Gastrocnemius medialis (tissue), 4 donors: ENCODE measurements at regions of chr21 and their contacts with region 1.

Region 1: DNA sequence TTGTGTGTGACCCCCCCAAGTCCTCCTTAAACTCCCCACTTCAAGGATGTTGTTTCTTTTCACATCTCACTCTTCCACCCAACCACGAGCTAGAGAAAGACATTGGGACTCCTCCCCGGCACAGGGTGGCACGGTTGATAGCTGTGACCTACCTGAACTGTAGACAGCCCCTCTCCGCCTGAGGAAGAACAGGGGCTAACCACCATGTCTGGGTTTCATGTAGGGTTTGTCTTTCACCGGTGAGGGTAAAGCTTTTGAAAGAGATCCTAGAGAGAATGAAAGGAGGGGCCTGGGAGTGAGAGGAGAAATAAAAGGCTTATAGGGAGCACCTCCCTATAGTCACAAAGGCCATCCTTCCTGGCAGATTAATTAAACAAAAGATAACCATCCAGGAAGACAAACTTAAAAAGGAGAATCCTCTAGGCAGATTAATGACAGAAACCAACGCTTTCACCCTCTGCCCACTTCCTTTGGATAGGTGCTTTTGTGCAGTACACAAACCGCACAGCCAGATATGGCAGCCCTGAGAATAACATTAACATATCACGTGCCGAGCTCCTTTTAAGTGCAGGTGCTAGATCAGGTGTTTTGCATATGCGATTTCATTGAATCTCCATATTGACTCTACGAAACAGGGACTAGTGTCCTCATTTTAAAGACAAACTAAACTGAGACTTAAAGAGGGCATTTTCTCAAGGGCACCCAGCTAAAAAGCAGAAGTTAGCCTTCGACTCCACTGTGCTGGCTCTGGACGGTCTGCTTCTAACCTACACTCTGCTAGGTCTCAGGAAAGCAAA is 178.0 kb upstream of the RUNX1 start:
- DNase-seq: no peak
- ATAC-seq: peak; percentile 24 to 27
- H3K4me3 ChIP-seq: no peak overlapping the region
- H3K27ac ChIP-seq: peak overlapping the region; percentile 85 to 93 (median 90)
- H3K4me1 ChIP-seq: peaks cover 53 to 68% of the 10 kb centered on the region in 2 donors
- H3K27me3 ChIP-seq: no peaks in the 10 kb centered on the region
- CTCF ChIP-seq: no peak
- POLR2A ChIP-seq: no peak

Region 2: DNA sequence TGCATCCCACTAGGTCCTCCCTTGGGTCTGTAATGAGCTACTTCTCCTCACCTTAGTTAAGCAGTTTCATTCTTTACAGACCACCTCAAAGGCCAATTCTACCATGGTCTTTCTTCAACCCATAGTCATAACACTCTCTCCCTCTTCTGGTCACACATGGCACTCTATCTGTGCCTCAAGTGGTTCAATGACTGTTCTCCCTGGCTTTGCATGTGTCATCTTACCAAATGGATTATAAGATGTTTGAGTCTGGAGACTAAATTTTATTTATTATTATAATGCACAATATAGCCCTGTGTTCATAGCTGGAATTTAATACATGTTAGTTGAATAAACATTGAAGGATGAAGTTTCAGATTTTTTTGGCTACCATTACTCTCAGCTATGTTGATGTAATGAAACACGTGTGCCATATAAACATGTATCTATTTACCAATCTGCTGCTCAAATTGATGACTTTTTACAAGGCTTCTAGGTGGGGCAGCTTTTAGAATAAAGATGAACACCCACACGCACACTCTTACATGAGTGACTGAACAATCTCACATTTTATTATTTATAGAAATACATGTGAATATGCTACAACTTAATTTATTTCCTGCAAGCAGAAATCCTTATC is 280.1 kb before region 1 on chr21:
- in situ Hi-C with region 1: no loop called
- intact Hi-C with region 1: no loop called
- DNase-seq: no peak
- ATAC-seq: no peak
- H3K4me3 ChIP-seq: no peak overlapping the region
- H3K27ac ChIP-seq: no peak overlapping the region
- H3K4me1 ChIP-seq: no peaks in the 10 kb centered on the region
- H3K27me3 ChIP-seq: no peaks in the 10 kb centered on the region
- CTCF ChIP-seq: no peak
- POLR2A ChIP-seq: no peak

Region 3: DNA sequence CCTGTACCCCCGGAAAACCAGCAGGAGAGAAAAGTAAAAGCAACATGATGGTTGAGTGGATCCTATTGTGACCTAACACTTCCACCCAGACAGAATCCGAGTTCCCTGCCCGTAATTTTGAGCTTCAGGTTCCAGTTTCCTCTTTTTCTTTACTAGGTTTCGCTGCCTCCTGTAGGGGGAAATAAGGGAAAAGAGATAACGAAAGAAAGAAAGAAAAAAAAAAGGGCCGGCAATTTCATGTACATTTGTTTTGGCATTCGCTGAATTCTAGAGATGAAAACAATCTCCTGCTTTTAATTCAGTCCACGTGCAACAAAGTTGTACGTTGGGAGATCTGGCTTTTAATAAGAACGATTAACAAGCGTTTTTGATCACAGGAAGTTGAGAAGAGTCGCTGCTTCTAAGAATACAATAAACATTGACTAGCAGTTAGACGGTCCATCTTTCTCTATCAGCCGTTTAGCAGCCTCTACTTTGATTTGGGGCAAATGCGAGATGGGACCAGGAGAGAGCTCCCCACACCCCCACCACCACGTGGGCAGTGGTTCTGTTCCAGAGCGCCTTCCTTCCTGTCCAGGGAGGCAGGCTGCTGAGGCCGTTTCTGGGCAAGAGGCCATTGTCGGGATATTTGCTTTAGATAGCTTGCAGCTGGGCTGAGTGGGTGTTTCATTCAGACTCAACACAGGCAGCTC is 22.1 kb before region 1 on chr21:
- in situ Hi-C with region 1: no loop called
- intact Hi-C with region 1: loop called (anchors 2 kb)
- DNase-seq: peak in 1 of 2 donors; percentile 49
- ATAC-seq: no peak
- H3K4me3 ChIP-seq: peak overlapping the region in 2 of 4 donors; percentile 8 to 17
- H3K27ac ChIP-seq: peak overlapping the region; percentile 75 to 90 (median 82)
- H3K4me1 ChIP-seq: peaks cover 58 to 82% of the 10 kb centered on the region in 2 donors
- H3K27me3 ChIP-seq: no peaks in the 10 kb centered on the region
- CTCF ChIP-seq: no peak
- POLR2A ChIP-seq: no peak